ENCODE measurements at regions of chr7 and their contacts with region 1.

Region 1: GRCh38 chr7:29105752-29106668 is 40.3 kb downstream of the CPVL start:
- DNase-seq: peak; percentile 59 to 79
- H3K4me3 ChIP-seq: no peak overlapping the region
- H3K4me3 Mint-ChIP-seq: no peak overlapping the region
- H3K27ac Mint-ChIP-seq: peak overlapping the region; percentile 50
- H3K4me1 ChIP-seq: peaks cover 33% of the 10 kb centered on the region
- H3K4me1 Mint-ChIP-seq: peaks cover 47% of the 10 kb centered on the region
- H3K27me3 ChIP-seq: no peaks in the 10 kb centered on the region
- H3K27me3 Mint-ChIP-seq: no peaks in the 10 kb centered on the region
- CTCF ChIP-seq: peak; percentile 85 to 88

Region 2: DNA sequence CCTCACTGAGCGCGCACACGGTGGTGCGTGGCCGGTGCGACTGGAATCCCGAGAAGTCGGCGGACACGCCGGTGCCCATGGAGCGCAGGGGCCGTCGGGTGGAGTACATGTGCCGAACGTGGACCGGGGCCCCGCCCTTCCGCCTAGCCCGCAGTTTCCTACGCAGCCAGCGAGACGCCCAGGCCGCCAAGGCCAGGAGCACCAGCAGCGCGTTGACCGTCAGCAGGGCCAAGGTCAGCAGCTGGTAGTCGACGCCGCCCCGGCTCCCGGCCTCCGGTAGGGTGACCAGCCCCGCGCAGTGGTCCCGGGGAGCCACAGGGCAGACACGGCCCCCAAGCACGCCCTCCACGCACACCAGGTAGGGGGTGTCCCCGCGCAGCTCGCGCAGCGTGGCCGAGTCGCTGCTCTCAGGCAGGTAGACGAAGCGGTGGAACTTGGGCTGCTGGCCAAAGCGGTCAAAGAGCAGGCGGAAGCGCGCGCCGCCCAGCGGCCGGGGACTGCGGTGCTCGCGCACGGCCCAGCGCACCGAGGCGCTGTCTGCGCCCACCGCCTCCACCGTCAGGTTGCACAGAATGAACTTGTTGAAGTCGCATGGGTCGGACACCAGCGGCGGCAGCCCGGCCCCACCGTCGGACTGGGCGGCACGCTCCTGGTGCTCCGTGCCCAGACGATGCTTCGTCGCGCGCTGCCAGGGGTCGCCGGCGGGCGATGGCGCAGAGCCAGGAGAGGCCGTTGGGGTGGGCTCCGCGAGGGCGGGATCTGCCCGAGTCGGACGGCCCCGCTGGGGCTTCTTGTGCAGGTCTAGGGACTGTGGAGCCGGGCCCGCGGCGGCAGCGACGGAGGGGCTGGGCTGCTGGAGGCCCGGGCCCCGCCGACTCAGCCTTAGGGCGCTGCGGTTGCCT is 150.0 kb before region 1 on chr7:
- CTCF ChIA-PET with region 1: interaction called, 76 read pairs
- POLR2A ChIA-PET with region 1: interaction called, 6 read pairs
- intact Hi-C with region 1: loop called (anchors 1 kb)
- DNase-seq: peak; percentile 84 to 89
- H3K4me3 ChIP-seq: peak overlapping the region; percentile 65
- H3K4me3 Mint-ChIP-seq: peak overlapping the region; percentile 73
- H3K27ac Mint-ChIP-seq: no peak overlapping the region
- H3K4me1 ChIP-seq: peaks cover 18% of the 10 kb centered on the region; the same call in 1 of the 2 replicates
- H3K4me1 Mint-ChIP-seq: peaks cover 17% of the 10 kb centered on the region
- H3K27me3 ChIP-seq: no peaks in the 10 kb centered on the region
- H3K27me3 Mint-ChIP-seq: no peaks in the 10 kb centered on the region
- CTCF ChIP-seq: peak; percentile 73 to 81

Region 3: GRCh38 chr7:29017713-29018112 is 88.3 kb before region 1 on chr7:
- CTCF ChIA-PET with region 1: no interaction called
- POLR2A ChIA-PET with region 1: no interaction called
- intact Hi-C with region 1: no loop called
- DNase-seq: no peak
- H3K4me3 ChIP-seq: no peak overlapping the region
- H3K4me3 Mint-ChIP-seq: no peak overlapping the region
- H3K27ac Mint-ChIP-seq: no peak overlapping the region
- H3K4me1 ChIP-seq: no peaks in the 10 kb centered on the region
- H3K4me1 Mint-ChIP-seq: no peaks in the 10 kb centered on the region
- H3K27me3 ChIP-seq: no peaks in the 10 kb centered on the region
- H3K27me3 Mint-ChIP-seq: no peaks in the 10 kb centered on the region
- CTCF ChIP-seq: no peak

Region 4: DNA sequence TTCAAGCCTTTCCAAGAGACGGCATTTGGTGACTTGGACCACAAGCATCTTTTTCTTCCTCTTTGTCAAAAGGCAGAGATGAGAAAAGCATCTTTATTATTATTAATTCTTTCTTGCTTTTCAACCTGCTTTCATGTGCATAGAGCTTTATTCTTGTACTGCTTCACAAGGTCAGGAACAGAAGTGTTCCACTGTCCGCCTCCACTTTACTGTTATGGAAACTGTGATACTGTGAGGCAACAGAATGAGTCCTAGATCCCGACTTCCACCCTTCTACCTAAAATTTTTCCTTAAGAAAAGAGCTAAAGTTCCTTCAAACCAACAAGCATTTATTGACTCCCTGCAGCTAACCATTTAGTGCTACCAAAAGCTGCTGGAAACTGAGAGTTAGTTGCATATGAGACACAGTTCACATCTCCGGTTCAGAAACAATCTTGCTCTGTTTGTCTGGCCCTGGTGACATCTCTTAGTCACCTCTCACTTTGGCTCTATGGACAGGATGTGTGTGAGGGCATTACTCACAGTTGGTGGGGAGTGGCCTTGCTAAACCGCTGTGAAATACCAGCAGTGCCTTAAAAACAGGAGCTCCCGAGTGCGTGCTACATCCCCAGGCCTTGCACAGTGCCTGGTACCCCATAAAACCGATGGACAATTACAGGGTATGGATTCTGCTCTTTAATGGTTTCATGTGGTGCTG is 70.8 kb before region 1 on chr7:
- CTCF ChIA-PET with region 1: interaction called, 4 read pairs
- POLR2A ChIA-PET with region 1: no interaction called
- intact Hi-C with region 1: loop called (anchors 5 kb)
- DNase-seq: no peak
- H3K4me3 ChIP-seq: no peak overlapping the region
- H3K4me3 Mint-ChIP-seq: no peak overlapping the region
- H3K27ac Mint-ChIP-seq: no peak overlapping the region
- H3K4me1 ChIP-seq: peaks cover 8% of the 10 kb centered on the region
- H3K4me1 Mint-ChIP-seq: peaks cover 4% of the 10 kb centered on the region
- H3K27me3 ChIP-seq: no peaks in the 10 kb centered on the region
- H3K27me3 Mint-ChIP-seq: no peaks in the 10 kb centered on the region
- CTCF ChIP-seq: no peak

Region 5: DNA sequence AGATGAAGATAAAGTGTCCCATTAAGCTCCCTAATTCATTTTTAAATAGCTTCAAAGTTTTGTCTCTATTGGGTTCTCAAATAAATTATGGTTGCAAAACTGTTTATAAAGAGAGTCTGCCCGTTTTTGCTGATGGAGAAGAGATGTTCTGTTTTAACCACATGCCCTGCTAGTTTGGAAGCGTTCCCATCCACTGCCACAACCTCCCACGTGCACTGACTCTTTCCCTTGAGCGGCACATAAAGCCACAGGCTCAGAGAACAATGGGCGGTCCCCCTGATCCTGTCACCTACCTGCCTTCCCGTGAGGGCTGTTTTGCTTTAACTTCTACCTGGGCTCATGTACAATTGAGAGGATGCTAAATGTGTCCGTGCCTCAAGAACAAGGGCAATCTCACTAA is 25.2 kb before region 1 on chr7:
- CTCF ChIA-PET with region 1: no interaction called
- POLR2A ChIA-PET with region 1: no interaction called
- intact Hi-C with region 1: no loop called
- DNase-seq: no peak
- H3K4me3 ChIP-seq: no peak overlapping the region
- H3K4me3 Mint-ChIP-seq: no peak overlapping the region
- H3K27ac Mint-ChIP-seq: no peak overlapping the region
- H3K4me1 ChIP-seq: no peaks in the 10 kb centered on the region
- H3K4me1 Mint-ChIP-seq: no peaks in the 10 kb centered on the region
- H3K27me3 ChIP-seq: no peaks in the 10 kb centered on the region
- H3K27me3 Mint-ChIP-seq: no peaks in the 10 kb centered on the region
- CTCF ChIP-seq: no peak

Region 6: GRCh38 chr7:29345600-29345999 is 239.6 kb after region 1 on chr7:
- CTCF ChIA-PET with region 1: interaction called, 17 read pairs
- POLR2A ChIA-PET with region 1: no interaction called
- intact Hi-C with region 1: no loop called
- DNase-seq: peak; percentile 63 to 64
- H3K4me3 ChIP-seq: no peak overlapping the region
- H3K4me3 Mint-ChIP-seq: no peak overlapping the region
- H3K27ac Mint-ChIP-seq: no peak overlapping the region
- H3K4me1 ChIP-seq: no peaks in the 10 kb centered on the region; the same call in 1 of the 2 replicates
- H3K4me1 Mint-ChIP-seq: no peaks in the 10 kb centered on the region
- H3K27me3 ChIP-seq: no peaks in the 10 kb centered on the region
- H3K27me3 Mint-ChIP-seq: no peaks in the 10 kb centered on the region
- CTCF ChIP-seq: peak; percentile 55 to 81